Esophagus muscularis mucosa (tissue), 4 donors: ENCODE measurements at regions of chr4 and their contacts with region 1.

Region 1: DNA sequence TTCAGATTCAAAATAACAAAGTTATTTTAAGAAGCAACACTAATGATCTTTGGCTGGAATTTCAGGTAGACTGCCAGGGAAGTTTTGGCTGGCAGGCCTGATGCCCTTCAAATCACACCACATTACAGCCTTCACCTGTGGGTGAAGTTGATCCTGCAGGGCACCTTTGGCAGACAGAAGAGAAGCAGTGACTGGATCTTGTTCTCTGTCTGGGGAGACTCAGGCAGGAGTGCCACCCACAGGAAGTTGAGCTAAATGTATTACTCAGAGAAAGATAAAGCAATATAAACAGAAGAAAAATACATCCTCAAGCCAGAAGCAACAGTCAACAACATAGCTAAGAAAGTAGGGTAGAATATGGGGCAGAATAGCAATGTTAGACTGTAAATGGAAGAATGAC is 12.8 kb upstream of the CFAP299 start:
- DNase-seq: no peak
- H3K4me3 ChIP-seq: no peak overlapping the region
- H3K27ac ChIP-seq: peak overlapping the region in 3 of 4 donors; percentile 20 to 30 (median 21)
- H3K4me1 ChIP-seq: peaks cover 0 to 25% (median 11%) of the 10 kb centered on the region in 4 donors
- H3K27me3 ChIP-seq: no peaks in the 10 kb centered on the region
- CTCF ChIP-seq: peak; percentile 28 to 44 (median 43)
- EP300 ChIP-seq: no peak
- POLR2A ChIP-seq: no peak

Region 2: DNA sequence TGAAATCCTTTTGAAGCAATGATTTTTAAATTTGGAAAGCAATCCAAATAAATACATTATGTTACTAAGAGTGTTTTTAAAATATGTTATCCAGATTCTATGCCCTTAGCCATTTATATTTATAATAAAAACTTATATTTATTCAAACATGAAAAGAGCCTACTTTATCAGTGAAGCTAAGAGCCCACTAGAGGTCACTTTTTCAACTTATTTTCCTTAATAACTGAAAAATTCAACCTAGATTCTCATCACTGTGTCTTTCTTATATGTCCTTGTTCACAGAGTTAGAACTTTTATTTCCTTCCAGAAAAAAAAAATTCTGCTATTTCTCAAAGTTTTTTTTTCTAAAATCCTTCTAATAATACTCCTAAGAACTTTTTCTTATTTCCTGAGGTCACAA is 101.6 kb before region 1 on chr4:
- intact Hi-C with region 1: loop called (anchors 5 kb)
- DNase-seq: no peak
- H3K4me3 ChIP-seq: no peak overlapping the region
- H3K27ac ChIP-seq: no peak overlapping the region
- H3K4me1 ChIP-seq: peaks cover 0 to 4% (median 0%) of the 10 kb centered on the region in 4 donors
- H3K27me3 ChIP-seq: no peaks in the 10 kb centered on the region
- CTCF ChIP-seq: peak; percentile 29 to 49 (median 34)
- EP300 ChIP-seq: no peak
- POLR2A ChIP-seq: no peak